Motor neuron (in vitro differentiated cells): ENCODE measurements at regions of chr2 and their contacts with region 1.

Region 1: DNA sequence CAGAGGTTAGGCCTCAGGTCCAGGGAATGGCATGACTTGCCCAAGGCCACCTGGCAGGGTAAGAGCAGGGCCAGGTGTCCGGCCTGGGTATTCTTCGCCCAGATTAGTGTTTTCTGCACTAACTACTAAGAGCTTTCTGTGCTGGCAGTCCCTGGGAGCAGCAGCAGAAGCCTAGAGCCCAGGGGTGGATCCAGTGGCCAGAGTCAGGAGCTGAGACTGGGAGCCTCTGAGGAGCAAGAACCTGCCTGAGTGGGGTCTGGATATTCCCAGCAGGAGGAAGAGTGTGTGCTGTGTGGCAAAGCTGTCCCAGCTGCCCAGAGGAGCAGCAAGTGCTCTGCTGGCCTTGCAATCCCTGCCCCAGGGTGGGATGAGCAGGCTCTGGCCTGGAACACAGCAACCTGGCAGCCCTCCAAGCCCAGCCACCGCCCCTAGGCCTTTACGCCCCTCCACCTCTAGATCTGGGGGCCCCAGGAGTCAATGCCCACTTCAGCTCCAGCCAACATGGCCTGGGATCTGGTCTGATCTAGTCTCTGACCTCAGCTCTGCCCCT is 30.7 kb upstream of the GPAT2 start:
- ATAC-seq: no peak
- H3K4me3 ChIP-seq: no peak overlapping the region
- H3K27ac ChIP-seq: no peak overlapping the region
- H3K4me1 ChIP-seq: peaks cover 0 to 3% of the 10 kb centered on the region in 2 donors

Region 2: DNA sequence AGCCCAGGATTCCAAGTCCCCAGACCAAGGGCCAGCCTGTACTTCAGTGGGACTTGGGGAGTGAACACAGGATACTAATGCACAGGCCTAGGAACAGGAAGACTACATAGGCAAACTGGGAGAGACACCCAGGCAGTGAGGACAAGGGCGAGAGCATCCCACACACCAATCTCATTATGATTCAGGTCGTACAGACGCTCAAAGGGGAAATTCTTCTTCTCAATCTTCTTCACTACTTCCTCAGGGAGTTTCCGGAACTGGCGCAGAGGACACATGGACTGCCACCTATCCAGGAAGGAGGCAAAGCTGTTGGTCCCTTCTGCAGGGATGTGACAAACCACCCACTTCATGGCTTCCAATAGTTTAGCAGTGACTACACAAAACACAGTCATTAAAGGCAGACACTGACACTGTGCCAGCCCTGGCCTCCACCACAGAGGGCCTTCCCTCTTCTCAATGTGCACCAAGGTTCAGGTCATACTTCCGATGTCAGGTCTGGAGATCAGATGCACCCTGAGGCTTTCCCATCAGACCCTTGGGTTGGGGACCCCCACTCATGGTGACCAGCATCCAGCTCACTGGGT is 221.9 kb after region 1 on chr2:
- in situ Hi-C with region 1: no loop called
- ATAC-seq: peak in 3 of 8 experiments; percentile 17 to 24 (median 21)
- H3K4me3 ChIP-seq: no peak overlapping the region
- H3K27ac ChIP-seq: no peak overlapping the region
- H3K4me1 ChIP-seq: no peaks in the 10 kb centered on the region

Region 3: DNA sequence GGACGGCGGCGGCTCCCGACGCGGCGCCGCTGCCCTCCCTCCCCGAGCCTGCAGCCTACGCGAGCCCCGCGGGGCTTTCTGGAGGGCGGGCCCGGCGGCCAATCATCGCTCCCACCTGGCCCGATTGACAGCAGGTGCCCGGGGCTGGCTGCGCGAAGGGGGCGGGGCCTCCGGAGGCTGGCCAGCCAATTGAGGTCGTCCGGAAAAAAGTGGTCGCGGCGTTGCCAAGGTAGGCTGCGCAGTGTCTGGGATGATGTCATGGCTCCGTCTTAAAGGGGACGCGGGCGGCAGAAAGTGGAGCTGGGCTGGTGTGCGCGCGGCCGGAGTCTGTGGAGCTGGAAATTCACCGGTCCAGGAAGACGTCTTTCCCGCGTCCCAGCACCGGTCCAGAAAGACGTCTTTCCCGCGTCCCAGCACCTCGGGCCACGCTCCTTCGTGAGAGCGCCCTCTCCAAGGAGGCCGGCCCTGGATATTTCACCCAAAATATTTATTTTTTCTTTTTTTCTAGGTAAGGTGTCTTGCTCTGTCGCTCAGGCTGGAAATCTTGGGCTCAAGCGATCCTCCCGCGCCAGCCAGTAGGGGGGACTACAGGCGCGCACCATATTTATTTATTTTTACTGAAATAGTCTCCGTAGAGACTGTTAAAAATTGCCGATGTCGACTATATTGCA is 1598.6 kb after region 1 on chr2 and contains the start of gene ACTR1B:
- in situ Hi-C with region 1: loop called in 2 of 9 experiments (anchors 25 kb)
- ATAC-seq: peak; percentile 74 to 91 (median 89)
- H3K4me3 ChIP-seq: peak within 1 kb of the TSS; percentile 60 to 94 (median 71)
- H3K27ac ChIP-seq: peak within 1 kb of the TSS; percentile 86 to 91
- H3K4me1 ChIP-seq: peaks cover 8 to 14% of the 10 kb centered on the region in 2 donors
- total RNA-seq, gene ACTR1B: 34.5 to 70.0 (median 46.9) TPM